Activated T-helper 1 cell treated with anti-CD3 and anti-CD28 coated beads, Interleukin-12 subunit alpha, Interleukin-12 subunit beta, Interleukin-2, Interleukin-4 antibody, amounts not matched to agents 30 ng/mL and 10 ng/mL and 1 ng/mL, durations not matched to agents 14 hours and 24 hours and 36 hours (primary cell): ENCODE measurements at regions of chr18 and their contacts with region 1.

Region 1: DNA sequence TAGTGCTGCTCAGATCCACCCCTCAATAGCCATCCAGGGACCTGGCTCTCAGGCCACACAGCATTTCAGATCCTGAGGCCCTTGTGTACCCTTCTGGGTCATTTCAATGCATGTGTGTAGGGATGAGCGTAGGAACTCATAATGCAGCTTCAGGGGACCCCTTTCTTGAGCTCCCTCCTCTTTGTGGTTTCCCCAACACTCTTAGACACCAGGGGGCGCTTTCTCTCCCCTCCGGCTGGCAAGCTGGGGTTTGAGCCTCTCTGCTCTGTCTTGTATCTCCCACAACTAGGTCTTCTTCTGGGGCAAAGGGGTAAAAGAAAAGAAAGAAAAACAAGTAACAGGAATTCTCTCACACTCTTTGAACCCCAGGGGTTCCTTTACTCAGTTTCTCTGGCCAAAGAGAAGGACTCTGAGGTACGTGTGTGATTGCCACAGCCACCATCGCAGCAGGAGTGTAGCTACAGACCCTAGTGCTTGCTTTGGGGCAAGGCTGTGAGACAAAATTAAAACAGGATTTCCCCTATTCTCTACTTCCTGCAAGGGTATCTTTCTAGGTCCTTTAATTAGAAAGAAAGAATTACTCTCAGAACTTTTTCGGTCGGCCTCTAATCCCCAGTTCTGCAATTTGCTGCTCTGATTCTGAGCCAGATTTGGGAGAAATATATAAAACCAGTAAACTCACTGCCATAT is 38.0 kb downstream of the CABYR start:
- DNase-seq: no peak
- H3K4me3 Mint-ChIP-seq: no peak overlapping the region
- H3K27ac Mint-ChIP-seq: no peak overlapping the region
- H3K4me1 Mint-ChIP-seq: peaks cover 10% of the 10 kb centered on the region
- H3K27me3 Mint-ChIP-seq: no peaks in the 10 kb centered on the region

Region 2: DNA sequence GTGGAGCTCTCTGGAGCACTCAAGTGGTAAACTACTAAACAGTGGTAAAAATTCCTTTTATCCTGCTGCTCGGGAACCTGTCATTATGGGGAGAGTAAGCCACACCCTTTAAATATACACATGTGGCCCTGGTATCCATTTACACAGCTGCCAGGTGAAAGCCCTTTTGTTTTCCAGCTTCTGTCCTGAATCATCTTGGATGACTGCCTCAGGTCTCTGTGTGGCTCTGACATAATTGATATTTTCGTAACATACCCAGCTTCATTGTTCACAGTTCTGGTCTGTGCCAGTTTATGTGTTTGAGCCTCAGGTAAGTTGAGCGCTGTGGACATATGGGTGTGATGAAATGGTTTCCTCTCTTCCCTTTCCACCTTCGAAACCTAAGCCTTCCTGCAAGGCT is 178.1 kb before region 1 on chr18:
- intact Hi-C with region 1: no loop called
- DNase-seq: no peak
- H3K4me3 Mint-ChIP-seq: no peak overlapping the region
- H3K27ac Mint-ChIP-seq: no peak overlapping the region
- H3K4me1 Mint-ChIP-seq: peaks cover 34% of the 10 kb centered on the region
- H3K27me3 Mint-ChIP-seq: no peaks in the 10 kb centered on the region

Region 3: DNA sequence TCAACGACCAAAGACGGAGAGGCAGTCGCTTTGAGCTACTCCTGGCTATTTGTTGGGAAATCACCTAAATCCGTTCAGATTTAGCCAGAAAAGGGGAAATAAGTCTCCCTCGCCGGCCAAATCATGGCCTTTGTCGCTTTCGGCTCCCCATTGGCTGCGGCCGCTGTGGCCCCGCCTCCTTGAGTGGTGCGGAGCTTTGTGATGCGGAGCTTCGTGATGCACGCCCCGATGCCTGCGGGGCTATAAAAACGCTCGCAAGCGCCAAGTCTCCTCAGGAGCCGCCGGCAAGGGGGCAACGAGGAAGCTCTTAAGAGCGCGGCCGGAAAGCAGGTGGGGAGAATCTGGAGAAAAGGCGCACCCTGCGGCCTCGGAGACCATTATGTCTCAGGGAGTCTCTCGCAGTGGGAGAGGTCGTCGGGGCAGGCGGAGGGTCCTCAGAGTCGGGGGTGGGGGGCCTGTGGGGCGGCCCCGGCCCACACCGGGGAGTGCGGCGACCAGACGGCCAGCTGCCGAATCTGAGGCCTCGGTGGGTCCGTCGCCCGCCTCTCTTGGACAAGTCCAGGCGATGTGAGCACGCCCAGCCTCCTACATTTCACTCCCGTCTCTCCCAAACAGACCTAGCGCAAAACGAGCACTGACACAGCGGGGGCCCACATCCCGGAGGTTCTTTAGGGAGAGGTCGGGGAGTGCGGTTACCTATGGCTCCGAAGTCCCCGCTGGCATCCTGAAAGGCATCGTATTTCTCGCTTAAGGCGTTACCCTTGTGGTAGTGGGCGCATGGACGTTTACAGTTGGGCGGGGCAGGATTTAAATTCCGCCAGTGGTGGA is 37.9 kb before region 1 on chr18 and contains the start of gene CABYR:
- intact Hi-C with region 1: loop called (anchors 2 kb)
- DNase-seq: peak; percentile 60
- H3K4me3 Mint-ChIP-seq: peak within 1 kb of the TSS; percentile 86
- H3K27ac Mint-ChIP-seq: peak within 1 kb of the TSS; percentile 48
- H3K4me1 Mint-ChIP-seq: peaks cover 25% of the 10 kb centered on the region
- H3K27me3 Mint-ChIP-seq: peaks cover 23% of the 10 kb centered on the region
- total RNA-seq, gene CABYR: 0.49 and 1.1 TPM in 2 replicates

Region 4: DNA sequence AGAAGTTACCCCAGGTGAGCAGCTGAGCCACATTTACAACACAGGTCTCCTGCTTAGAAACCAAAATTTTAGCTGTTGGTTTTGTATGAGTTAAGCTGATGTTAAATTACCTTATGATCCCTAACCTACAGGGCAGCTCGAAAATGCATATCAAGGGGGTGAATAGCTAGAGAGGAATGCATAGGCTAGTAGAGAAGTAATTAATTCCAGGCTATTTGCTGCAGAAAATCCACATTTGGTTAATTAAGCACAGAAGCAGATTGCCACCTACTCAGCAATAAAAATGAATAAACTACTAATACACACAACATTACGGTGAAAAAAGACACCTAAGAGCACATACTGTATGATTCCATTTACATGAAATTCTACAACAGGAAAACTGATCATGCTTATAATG is 129.3 kb after region 1 on chr18:
- intact Hi-C with region 1: no loop called
- DNase-seq: no peak
- H3K4me3 Mint-ChIP-seq: no peak overlapping the region
- H3K27ac Mint-ChIP-seq: no peak overlapping the region
- H3K4me1 Mint-ChIP-seq: no peaks in the 10 kb centered on the region
- H3K27me3 Mint-ChIP-seq: no peaks in the 10 kb centered on the region